ENCODE measurements at regions of chr5 and their contacts with region 1.

Region 1: DNA sequence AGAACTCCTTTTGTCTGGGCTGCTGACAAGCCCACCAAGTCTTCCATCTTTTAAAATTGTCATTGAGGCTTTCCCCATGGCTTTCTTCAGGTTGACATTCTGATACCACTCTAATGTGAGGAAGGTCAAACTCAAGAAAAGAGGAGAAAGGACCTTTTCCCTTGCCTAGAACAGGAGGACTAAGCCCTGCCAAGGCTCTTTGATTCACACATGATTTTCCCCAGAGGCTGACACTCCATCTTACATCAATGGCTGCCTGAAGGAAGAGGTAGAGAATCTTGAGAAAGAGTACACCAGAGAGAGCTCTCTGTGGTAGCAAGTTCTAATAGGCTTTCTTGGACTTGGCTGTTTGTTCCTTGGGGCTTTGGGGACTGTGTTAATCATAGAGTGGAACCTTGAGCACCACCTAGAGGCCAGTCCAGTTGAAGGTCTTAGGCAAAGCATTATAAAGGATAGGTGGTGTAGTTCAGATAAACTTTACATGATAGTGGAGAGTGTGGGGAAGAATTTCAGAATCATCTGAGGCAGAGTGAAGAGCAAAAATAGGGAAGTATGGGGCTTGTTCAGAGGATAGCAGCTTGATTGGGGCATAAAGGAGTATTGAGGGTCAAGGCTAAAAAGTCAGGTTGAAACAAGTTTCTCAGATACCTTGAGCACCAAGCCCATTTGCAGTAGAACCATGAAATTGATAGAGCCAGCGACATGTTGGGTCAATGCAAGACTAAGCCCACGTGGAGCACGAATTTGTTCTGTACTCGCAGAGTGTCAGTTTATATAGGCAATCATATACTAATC is 36.7 kb downstream of the NDFIP1 start:
- DNase-seq: peak; percentile 82
- H3K4me3 Mint-ChIP-seq: no peak overlapping the region
- H3K27ac Mint-ChIP-seq: no peak overlapping the region
- H3K4me1 Mint-ChIP-seq: peaks cover 11% of the 10 kb centered on the region
- H3K27me3 Mint-ChIP-seq: no peaks in the 10 kb centered on the region

Region 2: GRCh38 chr5:141359790-141360426 is 785.4 kb before region 1 on chr5 and contains the start of gene PCDHGB2:
- CTCF ChIA-PET with region 1: no interaction called
- intact Hi-C with region 1: no loop called
- DNase-seq: peak; percentile 19
- H3K4me3 Mint-ChIP-seq: peak within 1 kb of the TSS; percentile 56
- H3K27ac Mint-ChIP-seq: no peak within 1 kb of the TSS
- H3K4me1 Mint-ChIP-seq: no peaks in the 10 kb centered on the region
- H3K27me3 Mint-ChIP-seq: peaks cover 82% of the 10 kb centered on the region
- total RNA-seq, gene PCDHGB2: not detected

Region 3: DNA sequence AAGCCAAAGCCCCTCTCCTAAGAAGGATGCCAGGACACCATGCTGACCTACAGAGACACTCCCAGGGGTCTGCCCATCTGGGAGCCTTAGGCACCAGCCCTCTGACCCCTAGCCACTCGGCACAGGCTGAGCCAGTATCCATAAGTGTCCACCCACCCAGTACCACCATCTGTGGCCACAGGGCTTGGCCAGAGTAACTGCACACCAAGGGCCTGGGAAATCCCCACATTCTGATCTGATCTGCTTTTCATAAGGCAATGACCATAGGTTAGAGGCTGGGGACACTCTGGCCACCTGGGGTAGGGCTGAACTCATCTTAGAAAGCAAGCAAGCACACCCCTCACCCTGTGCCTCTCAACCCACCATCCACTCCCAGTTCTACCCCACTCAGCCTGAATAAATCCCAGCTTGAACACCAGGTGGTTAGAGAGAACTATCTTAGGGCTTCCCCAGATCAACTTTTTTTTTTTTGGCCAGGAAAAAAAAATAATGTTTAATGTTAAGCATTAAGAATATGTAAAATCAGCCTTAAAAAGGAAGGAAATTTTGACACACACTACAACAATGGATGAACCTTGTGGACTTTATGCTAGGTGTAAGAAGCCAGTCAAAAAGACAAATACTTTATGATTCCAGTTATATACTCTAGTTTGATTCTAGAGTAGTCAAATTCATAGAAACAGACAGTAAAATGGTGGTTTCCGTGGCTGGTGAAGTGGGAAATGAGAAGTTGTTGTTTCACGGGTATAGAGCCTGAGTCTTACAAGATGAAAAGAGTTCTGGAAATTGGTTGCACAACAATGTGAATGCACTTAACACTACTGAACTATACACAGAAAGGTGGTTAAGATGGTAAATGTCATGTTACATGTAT is 138.7 kb before region 1 on chr5:
- CTCF ChIA-PET with region 1: interaction called, 83 read pairs
- intact Hi-C with region 1: no loop called
- DNase-seq: peak; percentile 86
- H3K4me3 Mint-ChIP-seq: peak overlapping the region; percentile 69
- H3K27ac Mint-ChIP-seq: peak overlapping the region; percentile 100
- H3K4me1 Mint-ChIP-seq: peaks cover 87% of the 10 kb centered on the region
- H3K27me3 Mint-ChIP-seq: no peaks in the 10 kb centered on the region

Region 4: DNA sequence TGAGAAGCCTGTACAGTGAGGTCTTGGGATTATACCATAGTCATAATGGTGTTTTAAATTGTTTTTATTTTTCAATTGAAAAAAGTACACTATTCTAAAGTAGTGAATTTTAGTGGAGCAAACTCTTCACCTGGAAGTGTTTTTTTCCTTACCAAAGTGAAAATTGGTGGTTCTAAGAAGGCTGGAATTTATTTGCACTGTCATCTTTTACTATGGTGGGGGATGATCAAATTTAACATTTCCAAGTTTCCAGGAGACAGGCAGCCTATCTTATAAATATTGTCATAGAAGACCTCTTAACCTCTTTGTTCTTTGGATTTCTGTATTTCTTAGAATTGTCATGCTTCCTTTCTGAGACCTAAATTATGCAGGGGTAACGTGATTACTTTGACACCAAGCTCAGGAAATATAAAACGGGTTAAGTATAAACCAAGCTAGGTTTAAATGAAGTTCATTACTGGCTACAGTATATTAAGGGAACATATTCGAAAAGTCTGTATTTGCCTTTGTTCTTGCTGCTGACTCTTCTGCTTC is 16.6 kb before region 1 on chr5:
- CTCF ChIA-PET with region 1: interaction called, 17 read pairs
- intact Hi-C with region 1: no loop called
- DNase-seq: no peak
- H3K4me3 Mint-ChIP-seq: no peak overlapping the region
- H3K27ac Mint-ChIP-seq: peak overlapping the region; percentile 57
- H3K4me1 Mint-ChIP-seq: peaks cover 69% of the 10 kb centered on the region
- H3K27me3 Mint-ChIP-seq: no peaks in the 10 kb centered on the region